Activated CD4-positive, alpha-beta memory T cell treated with anti-CD3 and anti-CD28 coated beads for 36 hours (primary cell): ENCODE measurements at regions of chr16 and their contacts with region 1.

Region 1: GRCh38 chr16:50806099-50807062 is 64.5 kb downstream of the CYLD start:
- DNase-seq: peak; percentile 90
- H3K4me3 Mint-ChIP-seq: peak overlapping the region; percentile 67
- H3K27ac Mint-ChIP-seq: peak overlapping the region; percentile 72
- H3K4me1 Mint-ChIP-seq: peaks cover 12% of the 10 kb centered on the region
- H3K27me3 Mint-ChIP-seq: no peaks in the 10 kb centered on the region

Region 2: DNA sequence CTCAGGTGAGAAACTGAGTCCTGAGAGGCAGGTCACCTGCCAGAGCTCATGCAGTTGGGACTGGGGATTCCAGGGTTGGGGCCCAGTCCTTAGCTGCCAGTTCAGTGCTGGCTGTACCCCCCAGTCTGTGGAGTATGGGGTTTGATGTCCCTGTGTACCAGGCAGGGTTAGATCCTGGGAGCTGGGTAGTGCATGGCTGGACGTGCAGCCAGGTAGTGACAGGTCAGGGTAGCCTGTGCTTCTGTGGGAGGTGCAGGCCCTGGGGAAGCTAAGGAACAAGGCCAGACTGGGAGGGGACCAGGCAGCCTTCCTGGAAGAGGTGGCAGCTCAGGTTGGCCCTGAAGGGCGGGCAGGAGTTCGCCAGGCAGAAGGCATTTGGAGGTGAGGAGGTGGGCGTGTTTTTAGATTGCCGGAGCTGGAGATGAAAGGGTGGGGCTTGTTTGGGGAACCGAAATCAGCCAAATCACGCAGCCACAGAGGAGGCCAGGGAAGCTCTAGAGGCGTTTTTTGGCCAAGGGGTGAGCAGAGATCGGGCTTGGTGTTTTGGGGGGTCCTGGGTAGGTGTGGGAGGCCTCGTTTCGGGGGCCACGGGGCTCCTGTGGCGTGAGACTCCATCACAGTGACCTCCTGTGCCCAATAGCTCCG is 532.6 kb before region 1 on chr16:
- CTCF ChIA-PET with region 1: interaction called, 11 read pairs
- POLR2A ChIA-PET with region 1: no interaction called
- intact Hi-C with region 1: no loop called
- DNase-seq: peak; percentile 67
- H3K4me3 Mint-ChIP-seq: peak overlapping the region; percentile 94
- H3K27ac Mint-ChIP-seq: peak overlapping the region; percentile 99
- H3K4me1 Mint-ChIP-seq: peaks cover 91% of the 10 kb centered on the region
- H3K27me3 Mint-ChIP-seq: no peaks in the 10 kb centered on the region

Region 3: GRCh38 chr16:50368410-50369132 is 437.8 kb before region 1 on chr16 and contains the start of gene BRD7:
- CTCF ChIA-PET with region 1: interaction called, 40 read pairs
- POLR2A ChIA-PET with region 1: no interaction called
- intact Hi-C with region 1: loop called (anchors 5 kb)
- DNase-seq: peak; percentile 80
- H3K4me3 Mint-ChIP-seq: peak within 1 kb of the TSS; percentile 89
- H3K27ac Mint-ChIP-seq: peak within 1 kb of the TSS; percentile 80
- H3K4me1 Mint-ChIP-seq: peaks cover 45% of the 10 kb centered on the region
- H3K27me3 Mint-ChIP-seq: no peaks in the 10 kb centered on the region
- total RNA-seq, gene BRD7: 87.9 to 103 TPM

Region 4: GRCh38 chr16:50671644-50672260 is 134.6 kb before region 1 on chr16:
- CTCF ChIA-PET with region 1: interaction called, 430 read pairs
- POLR2A ChIA-PET with region 1: no interaction called
- intact Hi-C with region 1: loop called (anchors 1 kb)
- DNase-seq: peak; percentile 79
- H3K4me3 Mint-ChIP-seq: no peak overlapping the region
- H3K27ac Mint-ChIP-seq: peak overlapping the region; percentile 28
- H3K4me1 Mint-ChIP-seq: peaks cover 43% of the 10 kb centered on the region
- H3K27me3 Mint-ChIP-seq: no peaks in the 10 kb centered on the region

Region 5: GRCh38 chr16:50747207-50747956 is 59.0 kb before region 1 on chr16:
- CTCF ChIA-PET with region 1: interaction called, 39 read pairs
- POLR2A ChIA-PET with region 1: no interaction called
- intact Hi-C with region 1: loop called (anchors 1 kb)
- DNase-seq: no peak
- H3K4me3 Mint-ChIP-seq: peak overlapping the region; percentile 73
- H3K27ac Mint-ChIP-seq: peak overlapping the region; percentile 97
- H3K4me1 Mint-ChIP-seq: peaks cover 64% of the 10 kb centered on the region
- H3K27me3 Mint-ChIP-seq: no peaks in the 10 kb centered on the region

Region 6: DNA sequence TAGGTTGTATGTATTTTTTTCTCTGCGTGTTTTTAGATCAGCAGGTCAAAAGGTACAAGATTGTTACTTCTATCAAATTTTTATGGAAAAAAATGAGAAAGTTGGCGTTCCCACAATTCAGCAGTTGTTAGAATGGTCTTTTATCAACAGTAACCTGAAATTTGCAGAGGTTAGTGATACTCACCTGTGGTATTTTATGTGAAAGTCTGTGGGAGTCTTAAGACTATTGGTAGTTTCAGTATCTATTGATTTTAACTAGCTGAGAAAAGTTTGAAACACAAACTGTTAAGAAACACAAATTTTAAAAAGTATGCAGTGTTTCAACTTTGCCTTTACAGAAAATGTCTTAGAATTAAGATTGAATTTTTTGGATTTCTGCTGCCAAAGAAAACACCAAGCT is 14.9 kb before region 1 on chr16:
- CTCF ChIA-PET with region 1: interaction called, 50 read pairs
- POLR2A ChIA-PET with region 1: no interaction called
- intact Hi-C with region 1: no loop called
- DNase-seq: no peak
- H3K4me3 Mint-ChIP-seq: no peak overlapping the region
- H3K27ac Mint-ChIP-seq: no peak overlapping the region
- H3K4me1 Mint-ChIP-seq: peaks cover 42% of the 10 kb centered on the region
- H3K27me3 Mint-ChIP-seq: no peaks in the 10 kb centered on the region